ENCODE measurements at regions of chr2 and their contacts with region 1.

Region 1: GRCh38 chr2:156589381-156590079 is 153.4 kb downstream of the GPD2 start:
- DNase-seq: peak; percentile 27
- ATAC-seq: peak; percentile 74
- H3K4me3 ChIP-seq: no peak overlapping the region
- H3K27ac ChIP-seq: no peak overlapping the region
- H3K4me1 ChIP-seq: no peaks in the 10 kb centered on the region
- H3K27me3 ChIP-seq: no peaks in the 10 kb centered on the region
- CTCF ChIP-seq: peak; percentile 43 to 62 (median 59)
- POLR2A ChIP-seq: no peak
- RAD21 ChIP-seq: peak; percentile 88

Region 2: DNA sequence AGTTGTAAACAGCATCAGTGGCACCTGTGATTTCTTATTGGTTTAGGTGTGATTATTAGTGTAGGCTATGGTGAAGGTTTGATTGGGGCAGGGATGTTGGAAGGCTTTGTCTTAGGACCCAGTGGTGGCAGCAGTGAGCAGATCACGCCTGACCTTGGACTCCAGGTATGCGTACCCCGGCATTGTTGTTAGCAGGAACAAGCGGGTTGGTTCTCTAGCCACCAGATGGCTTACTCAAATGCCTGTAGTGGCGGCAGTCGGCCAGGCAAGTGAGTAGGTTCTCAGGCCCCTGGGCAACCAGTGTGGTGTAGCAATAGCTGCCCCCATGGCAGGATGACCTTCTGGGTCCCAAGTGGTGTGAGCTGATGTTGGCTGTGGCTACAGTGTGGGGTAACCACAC is 1332.7 kb before region 1 on chr2:
- CTCF ChIA-PET with region 1: no interaction called
- POLR2A ChIA-PET with region 1: no interaction called
- RAD21 ChIA-PET with region 1: no interaction called
- intact Hi-C with region 1: no loop called
- DNase-seq: no peak
- ATAC-seq: peak; percentile 63
- H3K4me3 ChIP-seq: no peak overlapping the region
- H3K27ac ChIP-seq: no peak overlapping the region
- H3K4me1 ChIP-seq: no peaks in the 10 kb centered on the region
- H3K27me3 ChIP-seq: no peaks in the 10 kb centered on the region
- CTCF ChIP-seq: no peak
- POLR2A ChIP-seq: no peak
- RAD21 ChIP-seq: no peak

Region 3: GRCh38 chr2:156065905-156066304 is 523.6 kb before region 1 on chr2:
- CTCF ChIA-PET with region 1: no interaction called
- POLR2A ChIA-PET with region 1: no interaction called
- RAD21 ChIA-PET with region 1: no interaction called
- intact Hi-C with region 1: loop called (anchors 2 kb)
- DNase-seq: no peak
- ATAC-seq: no peak; the same call in 1 of the 2 replicates
- H3K4me3 ChIP-seq: no peak overlapping the region
- H3K27ac ChIP-seq: no peak overlapping the region
- H3K4me1 ChIP-seq: no peaks in the 10 kb centered on the region
- H3K27me3 ChIP-seq: no peaks in the 10 kb centered on the region
- CTCF ChIP-seq: peak; percentile 41 to 65 (median 56); a peak in 5 of 6 replicates
- POLR2A ChIP-seq: no peak
- RAD21 ChIP-seq: peak; percentile 68

Region 4: GRCh38 chr2:156134887-156135286 is 454.6 kb before region 1 on chr2:
- CTCF ChIA-PET with region 1: no interaction called
- POLR2A ChIA-PET with region 1: no interaction called
- RAD21 ChIA-PET with region 1: no interaction called
- intact Hi-C with region 1: no loop called
- DNase-seq: no peak
- ATAC-seq: no peak
- H3K4me3 ChIP-seq: no peak overlapping the region
- H3K27ac ChIP-seq: no peak overlapping the region
- H3K4me1 ChIP-seq: no peaks in the 10 kb centered on the region
- H3K27me3 ChIP-seq: no peaks in the 10 kb centered on the region
- CTCF ChIP-seq: no peak
- POLR2A ChIP-seq: no peak
- RAD21 ChIP-seq: no peak

Region 5: DNA sequence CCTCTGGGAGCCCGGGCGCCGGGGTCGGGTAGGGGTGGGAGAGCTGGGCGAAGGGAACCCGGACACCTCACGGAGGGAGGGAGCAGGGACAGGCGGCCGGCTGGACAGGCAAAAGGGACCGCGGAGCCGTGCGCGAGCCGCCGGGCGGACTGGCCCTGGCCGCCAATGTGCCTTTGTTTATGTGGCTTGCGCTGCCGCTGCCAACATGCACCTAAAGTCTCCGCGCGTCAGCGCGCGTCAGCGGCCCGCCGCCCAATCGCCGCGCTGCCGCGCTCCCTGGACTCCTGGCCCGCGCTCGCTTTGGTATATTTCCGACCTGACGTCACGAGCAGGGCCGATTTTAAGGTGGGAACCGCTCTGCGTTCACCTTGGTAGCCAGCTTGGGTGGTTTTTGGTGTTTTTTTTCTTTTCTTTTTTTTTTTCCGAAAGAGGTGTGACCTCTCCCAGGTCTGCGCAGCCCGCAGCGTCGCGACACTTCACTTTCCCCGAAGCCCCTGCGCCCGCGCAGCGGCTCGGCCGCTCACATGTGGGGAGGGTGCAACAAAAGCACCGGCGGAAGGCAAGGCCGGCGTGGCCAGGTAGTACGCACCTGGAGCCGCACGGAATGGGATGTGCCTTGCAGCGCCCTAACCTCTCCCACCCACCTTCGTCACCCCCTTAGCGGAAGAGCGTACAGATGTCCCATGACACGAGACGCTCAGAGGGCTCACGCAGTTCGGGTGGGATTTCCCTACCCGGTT is 256.8 kb before region 1 on chr2 and contains the start of gene NR4A2:
- CTCF ChIA-PET with region 1: interaction called, 14 read pairs
- POLR2A ChIA-PET with region 1: interaction called, 8 read pairs
- RAD21 ChIA-PET with region 1: interaction called in 1 of 2 experiments, 3 read pairs
- intact Hi-C with region 1: loop called (anchors 1 kb)
- DNase-seq: peak; percentile 96
- ATAC-seq: peak; percentile 71
- H3K4me3 ChIP-seq: peak within 1 kb of the TSS; percentile 92 to 97
- H3K27ac ChIP-seq: peak within 1 kb of the TSS; percentile 97
- H3K4me1 ChIP-seq: peaks cover 25 to 44% of the 10 kb centered on the region in 2 experiments
- H3K27me3 ChIP-seq: no peaks in the 10 kb centered on the region
- CTCF ChIP-seq: no peak
- POLR2A ChIP-seq: peak; percentile 53
- RAD21 ChIP-seq: no peak
- total RNA-seq, gene NR4A2: 17.9 TPM

Region 6: GRCh38 chr2:156445296-156446217 is 144.0 kb before region 1 on chr2:
- CTCF ChIA-PET with region 1: no interaction called
- POLR2A ChIA-PET with region 1: no interaction called
- RAD21 ChIA-PET with region 1: no interaction called
- intact Hi-C with region 1: no loop called
- DNase-seq: no peak
- ATAC-seq: no peak
- H3K4me3 ChIP-seq: no peak overlapping the region
- H3K27ac ChIP-seq: no peak overlapping the region
- H3K4me1 ChIP-seq: peaks cover 0 to 17% of the 10 kb centered on the region in 2 experiments; a peak in 2 of 4 replicates
- H3K27me3 ChIP-seq: no peaks in the 10 kb centered on the region
- CTCF ChIP-seq: no peak
- POLR2A ChIP-seq: no peak
- RAD21 ChIP-seq: no peak

Region 7: GRCh38 chr2:156892467-156893281 is 303.1 kb after region 1 on chr2:
- CTCF ChIA-PET with region 1: interaction called, 4 read pairs
- POLR2A ChIA-PET with region 1: no interaction called
- RAD21 ChIA-PET with region 1: no interaction called
- intact Hi-C with region 1: loop called (anchors 2 kb)
- DNase-seq: peak; percentile 68
- ATAC-seq: peak; percentile 89
- H3K4me3 ChIP-seq: peak overlapping the region; percentile 49 to 67
- H3K27ac ChIP-seq: peak overlapping the region; percentile 56
- H3K4me1 ChIP-seq: peaks cover 2 to 38% of the 10 kb centered on the region in 2 experiments; a peak in 2 of 4 replicates
- H3K27me3 ChIP-seq: no peaks in the 10 kb centered on the region
- CTCF ChIP-seq: peak; percentile 51 to 63 (median 52); a peak in 5 of 6 replicates
- POLR2A ChIP-seq: no peak
- RAD21 ChIP-seq: peak; percentile 89

Region 8: DNA sequence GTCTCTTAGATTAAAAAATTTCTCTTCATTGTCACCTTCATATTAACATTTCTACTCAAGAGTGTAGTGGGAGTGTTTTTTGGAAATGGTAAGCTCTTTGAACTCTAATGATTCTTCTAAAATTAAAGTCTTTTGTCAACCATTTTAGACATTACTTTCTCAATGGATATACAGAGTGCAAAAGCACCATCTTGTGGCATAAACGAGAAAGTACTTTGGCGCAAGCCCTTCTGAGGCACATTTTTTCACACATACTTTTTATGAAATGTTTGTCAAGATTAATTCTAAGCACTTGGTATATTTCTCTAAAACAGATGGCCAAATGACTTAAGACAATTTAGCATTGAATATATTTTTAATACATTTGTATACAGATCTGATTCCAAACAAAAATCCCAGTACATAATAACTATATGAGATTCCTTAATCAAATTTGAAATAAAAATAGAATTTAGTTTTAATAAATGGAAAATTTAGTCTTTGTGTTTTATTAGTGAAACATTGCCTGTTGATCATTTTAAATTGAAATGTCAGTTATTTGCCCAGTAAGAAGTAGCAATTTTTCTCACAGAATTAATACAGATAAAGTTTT is 604.7 kb after region 1 on chr2:
- CTCF ChIA-PET with region 1: no interaction called
- POLR2A ChIA-PET with region 1: no interaction called
- RAD21 ChIA-PET with region 1: interaction called in 1 of 2 experiments, 3 read pairs
- intact Hi-C with region 1: loop called (anchors 10 kb)
- DNase-seq: peak; percentile 49
- ATAC-seq: peak; percentile 80
- H3K4me3 ChIP-seq: no peak overlapping the region
- H3K27ac ChIP-seq: no peak overlapping the region
- H3K4me1 ChIP-seq: peaks cover 0 to 3% of the 10 kb centered on the region in 2 experiments; a peak in 1 of 4 replicates
- H3K27me3 ChIP-seq: no peaks in the 10 kb centered on the region
- CTCF ChIP-seq: peak; percentile 55 to 75 (median 58); a peak in 4 of 6 replicates
- POLR2A ChIP-seq: no peak
- RAD21 ChIP-seq: peak; percentile 90

Measured in HCT116 (cell line).